ENCODE measurements at regions of chr1 and their contacts with region 1.

Region 1: GRCh38 chr1:41484372-41485241 is at the start of gene EDN2:
- DNase-seq: peak; percentile 66
- H3K4me3 ChIP-seq: peak within 1 kb of the TSS in 2 of 3 experiments; percentile 13 to 54
- H3K27ac ChIP-seq: no peak within 1 kb of the TSS
- H3K4me1 ChIP-seq: peaks cover 40% of the 10 kb centered on the region
- H3K27me3 ChIP-seq: no peaks in the 10 kb centered on the region
- CTCF ChIP-seq: peak; percentile 40 to 53
- total RNA-seq, gene EDN2: 0.56 to 1.3 TPM

Region 2: DNA sequence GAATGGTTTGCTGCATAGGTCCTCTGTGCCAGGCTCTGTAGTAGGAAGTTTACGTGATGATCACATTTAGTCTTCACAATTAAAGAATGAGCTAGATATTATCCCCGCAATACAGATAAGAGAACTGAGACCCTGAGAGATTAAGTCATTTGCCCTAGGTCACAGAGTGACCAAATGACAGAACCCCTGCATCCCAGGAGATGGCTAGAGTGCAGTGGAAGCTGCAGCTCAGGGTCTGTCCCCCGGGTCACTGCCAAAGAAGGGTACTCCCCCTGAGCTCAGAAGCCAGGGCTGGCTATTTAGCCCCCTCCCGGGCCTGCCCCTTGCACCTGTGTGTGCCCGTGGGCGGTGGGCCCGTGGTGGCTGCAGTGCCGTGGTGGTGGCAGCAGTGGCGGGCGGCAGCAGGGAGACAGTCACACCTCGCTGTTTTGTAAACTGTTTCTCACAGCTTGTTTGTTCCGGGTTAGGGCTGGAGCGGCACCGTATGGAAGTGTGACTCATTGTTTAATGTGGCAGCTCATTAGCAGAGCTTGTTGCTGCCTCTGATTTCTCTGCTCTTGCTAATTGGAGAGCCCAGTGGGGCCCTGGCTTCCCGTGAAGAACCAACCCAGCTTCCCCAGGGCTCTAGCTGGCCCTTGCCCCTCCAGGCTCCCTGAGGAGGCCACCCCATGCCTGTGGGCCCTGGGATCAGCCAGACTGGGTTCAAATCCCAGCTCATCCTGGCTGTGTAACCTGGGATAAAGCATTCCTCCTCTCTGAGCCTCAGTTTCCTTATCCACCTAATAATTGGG is 142.6 kb before region 1 on chr1:
- CTCF ChIA-PET with region 1: no interaction called
- dilution Hi-C with region 1: no loop called
- in situ Hi-C with region 1: no loop called
- intact Hi-C with region 1: no loop called
- DNase-seq: no peak
- H3K4me3 ChIP-seq: no peak overlapping the region
- H3K27ac ChIP-seq: no peak overlapping the region
- H3K4me1 ChIP-seq: no peaks in the 10 kb centered on the region
- H3K27me3 ChIP-seq: peaks cover 4% of the 10 kb centered on the region
- CTCF ChIP-seq: no peak

Region 3: DNA sequence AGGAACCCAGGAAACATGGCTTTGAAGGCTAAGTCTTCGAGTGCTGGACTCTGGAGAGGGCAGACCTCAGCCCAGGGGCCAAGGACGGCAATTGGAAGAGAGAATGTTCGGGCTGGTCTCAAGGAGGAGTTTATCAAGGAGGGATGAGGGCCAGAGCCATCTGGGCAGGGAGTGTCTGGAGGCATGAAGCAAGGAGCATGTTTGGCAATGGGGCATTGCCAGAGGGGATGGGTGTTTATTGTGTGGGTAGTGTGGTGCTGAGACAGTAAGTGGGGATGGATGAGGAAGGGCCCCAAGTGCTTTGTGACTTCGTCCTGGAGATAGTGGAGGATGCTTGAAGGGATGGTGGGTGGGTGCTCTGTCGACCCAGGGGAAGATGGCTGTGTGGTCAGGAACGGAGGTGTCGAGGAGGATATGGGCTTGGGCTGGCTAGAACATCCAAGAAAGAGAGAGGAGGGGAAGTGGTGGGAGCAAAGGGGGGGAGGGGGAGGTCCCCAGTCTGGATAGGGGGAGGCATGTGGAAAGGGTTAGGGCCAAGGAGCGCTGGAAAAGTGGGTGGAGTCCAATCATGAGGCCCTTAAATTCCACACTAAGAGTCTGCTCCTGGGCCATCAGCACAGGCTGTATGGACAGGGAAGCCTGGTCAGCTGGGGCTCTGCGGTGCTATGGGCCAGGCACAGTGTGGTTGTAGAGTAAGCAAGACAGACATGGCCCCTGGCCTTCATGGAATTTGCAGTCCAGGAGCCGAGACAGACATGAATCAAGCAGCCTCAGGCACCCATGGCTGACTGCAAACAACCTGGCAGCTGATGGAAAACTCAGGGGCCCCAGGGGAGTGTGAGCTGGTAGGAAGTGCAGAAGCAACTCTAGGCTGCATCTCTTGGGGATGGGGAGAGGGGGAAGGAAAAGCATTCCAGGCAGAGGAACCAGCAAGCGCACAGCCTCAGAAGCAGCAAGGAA is 36.5 kb before region 1 on chr1:
- CTCF ChIA-PET with region 1: interaction called, 6 read pairs
- dilution Hi-C with region 1: loop called (anchors 5 kb)
- in situ Hi-C with region 1: no loop called
- intact Hi-C with region 1: no loop called
- DNase-seq: no peak
- H3K4me3 ChIP-seq: no peak overlapping the region
- H3K27ac ChIP-seq: no peak overlapping the region
- H3K4me1 ChIP-seq: peaks cover 5% of the 10 kb centered on the region
- H3K27me3 ChIP-seq: no peaks in the 10 kb centered on the region
- CTCF ChIP-seq: no peak

Region 4: DNA sequence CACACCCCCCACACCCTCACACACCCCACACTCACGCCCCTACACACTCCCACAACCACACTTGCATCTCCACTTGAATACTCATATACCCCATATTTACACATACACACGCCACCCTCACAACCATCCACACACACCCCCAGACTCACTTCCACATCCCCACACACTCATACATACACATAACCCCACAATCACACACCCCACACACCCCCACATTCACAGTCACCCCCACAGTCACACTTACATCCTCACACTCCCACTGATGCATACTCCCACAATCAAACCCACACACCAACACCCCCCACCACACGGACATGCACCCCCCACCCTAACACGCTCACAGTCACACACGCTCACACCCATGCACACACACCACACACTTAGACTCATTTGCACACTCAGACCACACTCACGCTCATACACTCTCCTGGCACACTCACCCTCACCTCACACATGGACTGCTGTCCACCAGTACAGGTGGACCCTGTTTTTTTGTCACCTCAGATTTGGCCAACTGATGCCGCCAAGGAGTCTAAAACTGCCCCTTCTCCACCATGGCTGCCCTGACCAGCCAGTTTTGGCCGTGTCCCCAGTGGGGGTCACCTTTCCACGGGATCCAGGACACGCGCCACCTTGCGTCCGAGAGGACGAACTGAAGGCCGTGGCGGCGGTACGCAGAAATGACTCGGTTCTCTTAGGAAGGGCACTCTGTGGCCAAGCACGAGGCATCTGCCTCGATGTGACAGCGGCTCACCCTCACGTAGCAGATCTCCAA is 45.2 kb after region 1 on chr1:
- CTCF ChIA-PET with region 1: no interaction called
- dilution Hi-C with region 1: no loop called
- in situ Hi-C with region 1: no loop called
- intact Hi-C with region 1: no loop called
- DNase-seq: no peak
- H3K4me3 ChIP-seq: no peak overlapping the region
- H3K27ac ChIP-seq: no peak overlapping the region
- H3K4me1 ChIP-seq: no peaks in the 10 kb centered on the region
- H3K27me3 ChIP-seq: no peaks in the 10 kb centered on the region
- CTCF ChIP-seq: no peak